SK-N-SH (cell line): ENCODE measurements at regions of chr5 and their contacts with region 1.

Region 1: GRCh38 chr5:129836321-129836720 is 67.9 kb upstream of the CHSY3 start:
- DNase-seq: no peak
- H3K4me3 ChIP-seq: no peak overlapping the region
- H3K27ac ChIP-seq: no peak overlapping the region
- H3K4me1 ChIP-seq: no peaks in the 10 kb centered on the region
- H3K27me3 ChIP-seq: no peaks in the 10 kb centered on the region
- CTCF ChIP-seq: no peak
- EP300 ChIP-seq: no peak
- RAD21 ChIP-seq: no peak

Region 2: DNA sequence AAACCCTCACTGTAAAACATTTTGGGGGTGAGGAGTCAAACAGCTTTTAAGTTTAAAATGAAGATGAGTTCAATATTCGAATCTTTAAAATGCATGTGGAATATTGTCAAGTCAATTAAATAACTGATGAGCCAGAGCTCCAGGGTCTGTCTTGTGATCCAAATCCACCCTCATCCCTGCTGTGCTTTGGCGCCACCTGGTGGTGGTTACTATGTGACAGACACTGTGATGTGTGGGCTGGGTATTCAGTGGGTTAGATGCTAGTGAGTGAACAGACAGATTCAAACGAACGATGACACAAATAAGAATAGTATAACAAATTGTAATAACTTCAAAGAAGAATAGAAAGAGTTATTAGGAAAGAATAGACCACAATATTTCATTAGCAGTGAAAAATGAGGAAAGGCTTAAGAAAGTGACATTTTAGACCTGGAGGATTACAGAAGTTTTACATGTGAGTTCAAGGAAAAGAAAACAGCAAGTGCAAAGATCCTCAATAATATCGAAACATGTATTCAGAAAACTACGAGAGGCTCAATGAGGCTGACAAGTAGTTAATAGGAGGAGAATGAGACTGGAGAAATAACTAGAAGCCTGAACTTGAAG is 16.5 kb after region 1 on chr5:
- CTCF ChIA-PET with region 1: interaction called, 18 read pairs
- POLR2A ChIA-PET with region 1: no interaction called
- DNase-seq: peak; percentile 46
- H3K4me3 ChIP-seq: no peak overlapping the region; a peak in 1 of 4 replicates
- H3K27ac ChIP-seq: no peak overlapping the region
- H3K4me1 ChIP-seq: no peaks in the 10 kb centered on the region
- H3K27me3 ChIP-seq: peaks cover 4% of the 10 kb centered on the region; the same call in 1 of the 2 replicates
- CTCF ChIP-seq: peak; percentile 97
- EP300 ChIP-seq: no peak
- RAD21 ChIP-seq: peak; percentile 72

Region 3: GRCh38 chr5:130109152-130109551 is 272.8 kb after region 1 on chr5:
- CTCF ChIA-PET with region 1: no interaction called
- POLR2A ChIA-PET with region 1: no interaction called
- DNase-seq: peak; percentile 7
- H3K4me3 ChIP-seq: no peak overlapping the region; a peak in 1 of 4 replicates
- H3K27ac ChIP-seq: no peak overlapping the region
- H3K4me1 ChIP-seq: no peaks in the 10 kb centered on the region
- H3K27me3 ChIP-seq: no peaks in the 10 kb centered on the region; the same call in 1 of the 2 replicates
- CTCF ChIP-seq: peak; percentile 74
- EP300 ChIP-seq: no peak
- RAD21 ChIP-seq: peak; percentile 63